Right cardiac atrium (tissue), 5 donors: ENCODE measurements at regions of chr18 and their contacts with region 1.

Region 1: GRCh38 chr18:59056706-59057492 is 82.8 kb upstream of the SEC11C start:
- DNase-seq: peak; percentile 70 to 90 (median 84)
- ATAC-seq: peak; percentile 20 to 71
- H3K4me3 ChIP-seq: no peak overlapping the region
- H3K27ac ChIP-seq: no peak overlapping the region
- H3K4me1 ChIP-seq: peaks cover 2% of the 10 kb centered on the region
- H3K27me3 ChIP-seq: no peaks in the 10 kb centered on the region

Region 2: GRCh38 chr18:58863539-58864145 is 193.3 kb before region 1 on chr18:
- intact Hi-C with region 1: loop called in 2 of 4 experiments (anchors 10 kb)
- DNase-seq: peak; percentile 68 to 89 (median 86)
- ATAC-seq: peak; percentile 64 to 66
- H3K4me3 ChIP-seq: peak overlapping the region; percentile 73
- H3K27ac ChIP-seq: peak overlapping the region; percentile 97
- H3K4me1 ChIP-seq: peaks cover 20% of the 10 kb centered on the region
- H3K27me3 ChIP-seq: no peaks in the 10 kb centered on the region

Region 3: DNA sequence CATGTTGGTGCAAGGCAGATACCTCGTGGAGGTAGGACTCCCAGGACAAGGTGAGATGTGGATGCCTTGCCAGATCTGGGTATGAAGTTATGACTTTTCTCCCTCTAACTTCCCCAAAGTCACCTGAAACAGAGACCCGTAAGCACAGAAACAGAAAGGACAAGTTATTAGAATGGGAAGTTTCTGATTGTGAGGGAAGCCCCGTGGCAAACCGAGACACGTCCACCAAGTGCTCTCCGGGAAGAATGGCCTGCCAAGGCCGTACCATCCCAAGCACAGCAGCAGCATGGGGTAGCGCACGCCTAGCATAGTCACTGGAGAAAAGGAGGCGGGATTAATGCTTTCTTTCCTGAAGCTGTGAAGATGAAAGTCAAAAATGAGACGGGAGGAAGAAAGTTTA is 81.6 kb before region 1 on chr18:
- intact Hi-C with region 1: no loop called
- DNase-seq: no peak
- ATAC-seq: peak; percentile 67 to 78
- H3K4me3 ChIP-seq: no peak overlapping the region
- H3K27ac ChIP-seq: no peak overlapping the region
- H3K4me1 ChIP-seq: peaks cover 6% of the 10 kb centered on the region
- H3K27me3 ChIP-seq: no peaks in the 10 kb centered on the region

Region 4: DNA sequence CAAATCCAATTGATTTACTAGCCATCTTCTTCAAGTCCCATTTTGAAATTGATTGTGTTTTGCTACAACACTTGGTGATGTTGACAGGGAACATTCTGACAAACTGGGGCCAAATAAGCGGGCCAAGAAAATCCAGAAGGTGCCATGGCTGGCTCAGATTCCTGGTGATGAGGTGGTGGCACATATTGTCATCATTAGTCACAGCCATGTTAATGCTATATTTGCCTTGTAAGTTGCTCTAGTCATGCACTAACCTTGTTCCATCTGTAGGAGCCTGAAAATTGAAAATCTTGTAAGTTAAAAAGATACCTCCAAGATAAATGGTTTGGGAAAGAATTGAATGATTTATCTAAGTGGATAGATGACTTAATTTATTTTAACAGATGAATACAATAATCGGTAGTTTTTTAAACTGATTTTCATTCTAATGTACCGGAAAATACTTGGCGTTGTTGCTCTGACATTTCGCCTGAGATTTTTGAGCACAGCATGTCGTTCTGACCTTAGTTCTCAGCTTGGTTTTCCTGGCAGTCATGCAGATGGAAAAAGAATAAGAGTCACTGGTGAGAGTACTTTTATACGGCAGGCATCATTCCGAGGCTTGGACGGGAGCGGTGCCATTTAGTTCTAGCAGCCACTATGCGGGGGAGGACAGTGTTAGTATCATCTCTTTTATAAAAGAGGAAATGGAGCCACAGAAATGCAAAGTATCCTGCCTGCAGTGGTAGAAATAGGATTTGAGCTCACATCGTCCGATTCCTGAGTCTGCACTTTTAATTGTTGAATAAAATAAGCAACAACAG is 58.3 kb before region 1 on chr18:
- intact Hi-C with region 1: loop called in 2 of 4 experiments (anchors 5 to 10 kb)
- DNase-seq: peak; percentile 75 to 88 (median 78)
- ATAC-seq: peak; percentile 82 to 84
- H3K4me3 ChIP-seq: no peak overlapping the region
- H3K27ac ChIP-seq: peak overlapping the region; percentile 91
- H3K4me1 ChIP-seq: peaks cover 2% of the 10 kb centered on the region
- H3K27me3 ChIP-seq: no peaks in the 10 kb centered on the region

Region 5: GRCh38 chr18:59005262-59005661 is 51.6 kb before region 1 on chr18:
- intact Hi-C with region 1: loop called in 2 of 4 experiments (anchors 5 to 10 kb)
- DNase-seq: peak; percentile 73 to 87 (median 85)
- ATAC-seq: peak; percentile 90 to 91
- H3K4me3 ChIP-seq: no peak overlapping the region
- H3K27ac ChIP-seq: peak overlapping the region; percentile 80
- H3K4me1 ChIP-seq: peaks cover 5% of the 10 kb centered on the region
- H3K27me3 ChIP-seq: no peaks in the 10 kb centered on the region